Mammary epithelial cell (primary cell): ENCODE measurements at regions of chr4 and their contacts with region 1.

Region 1: GRCh38 chr4:67871867-67872266 is 11.9 kb downstream of the TMPRSS11D start:
- DNase-seq: peak; percentile 58
- H3K4me3 ChIP-seq: no peak overlapping the region
- H3K27ac ChIP-seq: no peak overlapping the region
- H3K4me1 ChIP-seq: peaks cover 9% of the 10 kb centered on the region
- H3K27me3 ChIP-seq: no peaks in the 10 kb centered on the region
- CTCF ChIP-seq: peak; percentile 62 to 64

Region 2: DNA sequence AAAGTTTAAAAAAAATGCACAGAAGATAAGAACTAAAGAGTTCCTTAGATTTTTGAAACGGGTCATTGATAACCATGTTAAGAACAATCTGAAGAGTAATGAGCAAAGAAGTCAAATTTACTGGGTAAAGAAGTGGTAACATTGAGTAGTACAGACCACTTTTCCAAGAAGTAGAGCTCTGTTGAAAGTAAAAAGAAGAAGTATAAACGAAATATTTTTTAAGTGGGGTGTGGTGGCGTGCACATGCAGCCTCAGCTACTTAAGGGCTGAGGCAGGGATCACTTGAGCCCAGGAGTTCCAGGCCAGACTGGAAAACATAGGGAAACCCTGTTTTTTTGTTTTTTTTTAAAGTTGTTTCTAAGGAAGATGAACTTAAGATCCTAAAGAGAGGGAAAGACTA is 239.4 kb before region 1 on chr4:
- CTCF ChIA-PET with region 1: no interaction called
- dilution Hi-C with region 1: no loop called
- in situ Hi-C with region 1: no loop called
- intact Hi-C with region 1: no loop called
- DNase-seq: no peak
- H3K4me3 ChIP-seq: no peak overlapping the region
- H3K27ac ChIP-seq: no peak overlapping the region
- H3K4me1 ChIP-seq: no peaks in the 10 kb centered on the region
- H3K27me3 ChIP-seq: no peaks in the 10 kb centered on the region
- CTCF ChIP-seq: no peak

Region 3: DNA sequence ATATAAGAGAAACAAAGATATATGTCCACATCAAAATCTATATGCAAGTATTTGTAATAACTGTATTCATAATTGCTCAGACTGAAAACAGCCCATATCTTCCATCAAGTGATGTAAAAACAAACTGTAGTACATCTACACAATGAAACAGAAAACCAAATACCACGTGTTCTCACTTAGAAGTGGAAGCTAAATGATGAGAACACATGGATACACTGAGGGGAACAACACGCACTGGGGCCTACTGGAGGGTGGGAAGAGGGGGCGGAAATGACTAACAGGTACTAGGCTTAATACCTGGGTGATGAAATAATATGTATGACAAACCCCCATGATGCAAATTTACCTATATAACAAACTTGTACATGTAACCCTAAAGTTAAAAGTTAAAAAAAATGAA is 213.6 kb before region 1 on chr4:
- CTCF ChIA-PET with region 1: no interaction called
- dilution Hi-C with region 1: no loop called
- in situ Hi-C with region 1: no loop called
- intact Hi-C with region 1: no loop called
- DNase-seq: peak; percentile 14
- H3K4me3 ChIP-seq: no peak overlapping the region
- H3K27ac ChIP-seq: no peak overlapping the region
- H3K4me1 ChIP-seq: no peaks in the 10 kb centered on the region
- H3K27me3 ChIP-seq: no peaks in the 10 kb centered on the region
- CTCF ChIP-seq: no peak

Region 4: GRCh38 chr4:67885762-67886161 is 13.9 kb after region 1 on chr4:
- CTCF ChIA-PET with region 1: no interaction called
- dilution Hi-C with region 1: no loop called
- in situ Hi-C with region 1: no loop called
- intact Hi-C with region 1: loop called (anchors 1 kb)
- DNase-seq: peak; percentile 98
- H3K4me3 ChIP-seq: no peak overlapping the region
- H3K27ac ChIP-seq: peak overlapping the region; percentile 88
- H3K4me1 ChIP-seq: peaks cover 16% of the 10 kb centered on the region
- H3K27me3 ChIP-seq: no peaks in the 10 kb centered on the region
- CTCF ChIP-seq: no peak

Region 5: DNA sequence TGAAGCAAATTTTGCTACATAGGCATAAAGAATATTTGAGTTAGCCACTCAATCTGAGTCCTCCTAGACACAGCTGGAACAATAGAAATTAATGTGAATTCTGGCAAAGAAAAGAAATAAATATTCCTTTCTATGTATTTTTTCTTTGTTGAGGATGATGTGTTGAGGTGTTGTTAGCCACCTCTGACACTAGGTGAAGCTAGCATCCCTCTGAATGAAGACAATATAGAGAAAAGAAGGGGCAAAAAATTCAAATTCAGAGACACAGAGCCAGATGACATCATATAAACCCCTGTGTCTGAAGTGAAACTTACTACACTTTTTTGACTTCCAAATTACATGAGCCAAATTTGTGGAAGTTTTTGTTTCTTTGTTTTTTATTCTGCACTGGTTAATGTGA is 46.6 kb after region 1 on chr4:
- CTCF ChIA-PET with region 1: no interaction called
- dilution Hi-C with region 1: loop called (anchors 5 kb)
- in situ Hi-C with region 1: loop called in 1 of 2 experiments (anchors 5 kb)
- intact Hi-C with region 1: no loop called
- DNase-seq: peak; percentile 8
- H3K4me3 ChIP-seq: no peak overlapping the region
- H3K27ac ChIP-seq: no peak overlapping the region
- H3K4me1 ChIP-seq: no peaks in the 10 kb centered on the region
- H3K27me3 ChIP-seq: no peaks in the 10 kb centered on the region
- CTCF ChIP-seq: peak; percentile 74 to 77

Region 6: DNA sequence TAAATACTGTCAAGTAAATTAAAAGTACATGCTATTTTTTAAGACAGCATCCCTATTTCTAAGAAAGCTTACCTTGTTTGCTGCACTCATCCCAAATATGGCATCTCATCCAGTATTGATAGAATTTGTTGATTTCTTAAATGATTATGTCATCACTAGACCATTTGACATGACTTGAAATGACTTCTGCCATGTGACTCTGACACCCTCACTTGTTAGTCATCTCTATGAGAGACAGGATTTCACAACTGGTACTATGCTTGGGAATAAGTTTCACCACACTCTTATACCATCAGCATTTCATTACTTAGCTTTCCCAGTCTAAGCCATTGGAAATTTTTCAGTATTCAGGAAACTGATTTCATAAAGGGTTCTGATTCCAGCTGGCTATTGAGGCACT is 202.5 kb after region 1 on chr4:
- CTCF ChIA-PET with region 1: no interaction called
- dilution Hi-C with region 1: no loop called
- in situ Hi-C with region 1: no loop called
- intact Hi-C with region 1: loop called (anchors 10 kb)
- DNase-seq: peak; percentile 83
- H3K4me3 ChIP-seq: no peak overlapping the region
- H3K27ac ChIP-seq: no peak overlapping the region
- H3K4me1 ChIP-seq: peaks cover 5% of the 10 kb centered on the region
- H3K27me3 ChIP-seq: no peaks in the 10 kb centered on the region
- CTCF ChIP-seq: no peak

Region 7: GRCh38 chr4:68124224-68124623 is 252.4 kb after region 1 on chr4:
- CTCF ChIA-PET with region 1: no interaction called
- dilution Hi-C with region 1: no loop called
- in situ Hi-C with region 1: no loop called
- intact Hi-C with region 1: no loop called
- DNase-seq: no peak
- H3K4me3 ChIP-seq: no peak overlapping the region
- H3K27ac ChIP-seq: no peak overlapping the region
- H3K4me1 ChIP-seq: no peaks in the 10 kb centered on the region
- H3K27me3 ChIP-seq: no peaks in the 10 kb centered on the region
- CTCF ChIP-seq: no peak

Region 8: DNA sequence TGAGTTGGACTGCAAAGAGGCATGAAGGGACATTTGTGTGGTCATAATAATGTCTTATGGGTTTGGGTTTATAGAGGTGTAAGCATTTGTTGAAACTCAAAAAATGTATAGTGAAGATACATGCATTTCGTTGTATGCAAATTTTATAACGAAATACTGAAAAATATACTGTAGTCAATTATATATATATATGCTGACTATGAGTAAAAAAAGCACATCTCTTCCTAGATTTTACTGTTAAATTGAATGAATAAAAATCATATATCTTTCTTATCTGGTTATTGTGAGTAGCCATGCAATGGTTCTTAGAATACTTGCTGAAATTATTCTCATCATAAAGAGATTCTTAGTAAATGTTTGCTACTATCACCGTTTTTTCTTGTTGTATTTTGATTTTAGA is 978.4 kb after region 1 on chr4:
- CTCF ChIA-PET with region 1: no interaction called
- dilution Hi-C with region 1: no loop called
- in situ Hi-C with region 1: no loop called
- intact Hi-C with region 1: no loop called
- DNase-seq: no peak
- H3K4me3 ChIP-seq: no peak overlapping the region
- H3K27ac ChIP-seq: no peak overlapping the region
- H3K4me1 ChIP-seq: no peaks in the 10 kb centered on the region
- H3K27me3 ChIP-seq: no peaks in the 10 kb centered on the region
- CTCF ChIP-seq: no peak